GM12878 (cell line): ENCODE measurements at regions of chr1 and their contacts with region 1.

Region 1: GRCh38 chr1:3727042-3727824 is 25.0 kb upstream of the CCDC27 start:
- DNase-seq: no peak
- ATAC-seq: peak; percentile 75
- H3K4me3 ChIP-seq: no peak overlapping the region
- H3K27ac ChIP-seq: no peak overlapping the region
- H3K4me1 ChIP-seq: no peaks in the 10 kb centered on the region
- H3K27me3 ChIP-seq: no peaks in the 10 kb centered on the region
- CTCF ChIP-seq: peak; percentile 48 to 50 (median 49); a peak in 5 of 6 replicates
- EP300 ChIP-seq: no peak
- POLR2A ChIP-seq: no peak
- RAD21 ChIP-seq: peak; percentile 47

Region 2: DNA sequence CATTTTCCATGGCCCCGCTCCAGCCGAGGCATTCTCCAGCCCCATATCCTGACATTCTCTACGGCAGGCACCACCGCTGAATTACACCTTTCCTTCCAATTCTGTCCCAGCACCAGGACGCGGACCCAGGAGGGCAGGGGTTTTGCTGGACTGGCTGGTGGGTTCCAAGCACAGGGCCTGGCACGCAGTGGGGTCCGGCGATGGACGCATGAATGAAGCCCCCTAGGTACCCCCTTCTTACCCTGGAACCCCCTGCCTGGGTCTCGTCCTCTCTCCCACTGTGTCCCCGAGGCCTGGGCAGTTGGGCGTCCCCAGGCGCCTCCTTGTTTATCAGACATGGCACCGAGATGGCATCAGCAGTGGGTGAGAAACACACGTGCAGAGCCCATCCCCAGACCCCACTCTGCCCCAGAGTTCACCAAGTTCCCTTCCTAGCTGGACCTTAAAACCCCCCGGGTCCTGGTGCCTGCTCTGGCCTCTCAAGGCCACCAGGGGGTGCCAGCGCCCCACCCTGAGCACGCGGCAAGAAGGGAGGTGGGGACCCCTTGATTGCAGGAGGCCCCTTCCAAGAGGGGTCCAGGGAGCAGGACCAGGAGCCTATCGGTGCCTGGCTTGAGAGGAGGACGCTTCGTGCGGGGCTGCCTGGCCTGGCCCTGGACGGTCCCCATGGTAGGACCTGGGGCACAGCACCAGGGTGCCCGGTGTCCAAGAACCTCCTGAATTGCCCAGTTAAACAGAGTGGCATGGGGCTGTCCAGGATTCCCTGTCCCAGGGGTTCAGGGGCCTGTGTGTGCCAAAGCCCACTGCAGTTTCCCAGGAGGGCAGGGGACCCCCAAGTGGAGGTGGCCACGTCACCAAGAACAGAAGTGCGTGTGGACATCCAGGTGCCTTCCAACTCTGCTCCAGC is 162.1 kb before region 1 on chr1:
- CTCF ChIA-PET with region 1: interaction called, 4 read pairs
- POLR2A ChIA-PET with region 1: no interaction called
- RAD21 ChIA-PET with region 1: interaction called, 3 read pairs
- SMC1A ChIA-PET with region 1: interaction called, 3 read pairs
- in situ Hi-C with region 1: no loop called
- intact Hi-C with region 1: loop called (anchors 1 kb)
- DNase-seq: no peak
- ATAC-seq: peak; percentile 82
- H3K4me3 ChIP-seq: no peak overlapping the region
- H3K27ac ChIP-seq: no peak overlapping the region
- H3K4me1 ChIP-seq: no peaks in the 10 kb centered on the region
- H3K27me3 ChIP-seq: no peaks in the 10 kb centered on the region; a peak in 2 of 4 replicates
- CTCF ChIP-seq: peak; percentile 91 to 95 (median 92)
- EP300 ChIP-seq: no peak
- POLR2A ChIP-seq: no peak
- RAD21 ChIP-seq: peak; percentile 92

Region 3: DNA sequence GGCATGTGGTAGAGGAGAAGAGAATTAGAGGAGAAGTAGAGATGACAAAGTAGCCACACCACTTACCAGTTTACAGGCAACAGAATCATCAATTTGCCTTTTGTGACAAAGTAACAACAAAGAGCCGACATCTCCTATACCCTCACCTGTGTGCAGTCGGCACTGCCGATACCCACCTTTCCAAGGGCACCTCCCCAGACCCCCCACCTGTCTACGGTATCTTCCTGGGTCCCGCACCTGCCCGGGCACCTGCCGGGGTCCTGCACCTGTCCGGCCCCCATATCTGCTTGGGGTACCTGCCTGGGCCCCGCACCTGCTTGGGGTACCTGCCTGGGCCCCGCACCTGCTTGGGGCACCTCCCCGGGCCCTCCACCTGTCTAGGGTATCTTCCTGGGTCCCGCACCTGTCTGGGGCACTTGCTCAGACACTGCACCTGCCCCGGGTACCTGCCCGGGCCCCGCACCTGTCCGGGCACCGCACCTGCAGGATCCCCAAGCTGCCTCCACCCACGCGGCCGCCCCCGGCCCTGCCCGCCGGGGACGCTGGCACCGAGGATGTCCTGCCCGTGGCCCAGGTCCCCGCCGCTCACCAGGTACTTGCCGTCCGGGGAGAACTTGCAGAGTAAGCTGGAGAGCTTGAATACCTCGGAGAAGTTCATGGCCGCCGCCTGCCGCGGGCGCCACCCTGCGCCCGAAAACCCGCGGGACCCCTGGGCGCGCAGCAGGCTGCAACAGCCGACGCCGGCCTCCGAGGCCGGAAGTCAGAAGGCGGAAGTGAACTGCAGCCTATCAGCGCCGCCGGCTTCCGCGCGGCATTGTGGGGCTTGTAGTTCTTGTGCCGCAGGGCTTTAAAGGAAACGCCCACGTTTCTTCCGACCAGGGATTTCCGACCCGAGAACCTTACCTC is 77.6 kb before region 1 on chr1 and contains the start of gene WRAP73:
- CTCF ChIA-PET with region 1: interaction called, 14 read pairs
- POLR2A ChIA-PET with region 1: no interaction called
- RAD21 ChIA-PET with region 1: no interaction called
- SMC1A ChIA-PET with region 1: interaction called, 5 read pairs
- in situ Hi-C with region 1: no loop called
- intact Hi-C with region 1: no loop called
- DNase-seq: peak; percentile 76
- ATAC-seq: peak; percentile 74
- H3K4me3 ChIP-seq: peak within 1 kb of the TSS; percentile 84
- H3K27ac ChIP-seq: peak within 1 kb of the TSS; percentile 68; the same call in 1 of the 2 replicates
- H3K4me1 ChIP-seq: peaks cover 15% of the 10 kb centered on the region
- H3K27me3 ChIP-seq: no peaks in the 10 kb centered on the region
- CTCF ChIP-seq: peak; percentile 25 to 37 (median 32); a peak in 3 of 6 replicates
- EP300 ChIP-seq: no peak
- POLR2A ChIP-seq: peak; percentile 79
- RAD21 ChIP-seq: no peak
- polyA plus RNA-seq, gene WRAP73: 3.2 to 7.6 TPM